ENCODE measurements at regions of chr1 and their contacts with region 1.

Region 1: GRCh38 chr1:172638885-172639831 is 19.7 kb upstream of the FASLG start:
- DNase-seq: peak; percentile 77
- H3K4me3 Mint-ChIP-seq: peak overlapping the region; percentile 62
- H3K27ac Mint-ChIP-seq: peak overlapping the region; percentile 99
- H3K4me1 Mint-ChIP-seq: peaks cover 75% of the 10 kb centered on the region
- H3K27me3 Mint-ChIP-seq: peaks cover 5% of the 10 kb centered on the region

Region 2: DNA sequence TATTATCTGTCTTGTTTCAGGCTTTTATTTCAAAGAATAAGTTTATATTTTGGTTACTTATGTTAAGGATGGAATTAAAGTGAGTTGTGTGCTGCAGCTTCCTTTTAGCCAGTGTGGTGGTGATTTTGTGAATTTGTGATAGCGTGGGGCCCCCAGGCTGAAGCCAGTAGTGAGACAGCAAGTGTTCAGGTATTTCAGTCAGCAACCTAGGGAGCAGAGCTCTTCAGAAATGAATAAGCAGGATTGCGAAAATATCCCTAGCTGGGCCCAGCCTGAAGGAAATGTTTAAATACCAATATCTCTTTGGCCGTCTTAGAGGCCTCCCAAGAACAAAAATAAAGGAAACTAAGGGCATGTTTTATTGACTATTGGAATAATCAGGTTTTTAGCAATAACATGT is 369.5 kb before region 1 on chr1:
- intact Hi-C with region 1: loop called (anchors 5 kb)
- DNase-seq: no peak
- H3K4me3 Mint-ChIP-seq: peak overlapping the region; percentile 43
- H3K27ac Mint-ChIP-seq: peak overlapping the region; percentile 82
- H3K4me1 Mint-ChIP-seq: peaks cover 64% of the 10 kb centered on the region
- H3K27me3 Mint-ChIP-seq: no peaks in the 10 kb centered on the region

Region 3: DNA sequence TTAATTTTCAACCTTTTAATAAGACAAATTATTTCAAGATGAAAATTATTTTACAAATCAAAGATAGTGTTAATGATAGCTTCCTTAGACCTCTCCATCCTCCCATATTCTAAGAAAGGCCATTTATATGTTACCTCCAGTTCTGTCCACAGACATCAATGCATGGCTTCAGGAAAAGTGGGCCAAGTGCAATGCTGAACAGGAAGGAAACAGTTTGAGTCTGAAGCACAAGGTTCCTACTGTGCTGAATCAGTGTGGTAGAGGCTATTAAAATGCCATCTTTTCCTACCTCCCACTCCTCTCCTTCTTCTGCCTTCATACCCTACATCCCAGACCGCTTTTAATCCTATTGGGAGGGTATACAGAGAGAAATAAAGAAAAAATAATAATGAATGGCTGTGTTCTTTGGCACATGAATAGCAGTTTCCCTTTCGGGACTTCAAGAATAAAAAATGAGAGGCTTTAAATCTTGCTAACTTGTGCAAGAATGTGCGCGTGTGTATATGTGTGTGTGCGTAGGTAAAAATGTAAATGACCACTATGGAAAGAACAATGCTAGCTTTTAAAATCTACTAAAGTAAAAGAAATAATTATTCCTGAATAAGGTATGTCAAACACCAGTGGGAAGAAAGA is 281.3 kb before region 1 on chr1:
- intact Hi-C with region 1: loop called (anchors 5 kb)
- DNase-seq: no peak
- H3K4me3 Mint-ChIP-seq: peak overlapping the region; percentile 6
- H3K27ac Mint-ChIP-seq: peak overlapping the region; percentile 83
- H3K4me1 Mint-ChIP-seq: peaks cover 56% of the 10 kb centered on the region
- H3K27me3 Mint-ChIP-seq: no peaks in the 10 kb centered on the region

Region 4: DNA sequence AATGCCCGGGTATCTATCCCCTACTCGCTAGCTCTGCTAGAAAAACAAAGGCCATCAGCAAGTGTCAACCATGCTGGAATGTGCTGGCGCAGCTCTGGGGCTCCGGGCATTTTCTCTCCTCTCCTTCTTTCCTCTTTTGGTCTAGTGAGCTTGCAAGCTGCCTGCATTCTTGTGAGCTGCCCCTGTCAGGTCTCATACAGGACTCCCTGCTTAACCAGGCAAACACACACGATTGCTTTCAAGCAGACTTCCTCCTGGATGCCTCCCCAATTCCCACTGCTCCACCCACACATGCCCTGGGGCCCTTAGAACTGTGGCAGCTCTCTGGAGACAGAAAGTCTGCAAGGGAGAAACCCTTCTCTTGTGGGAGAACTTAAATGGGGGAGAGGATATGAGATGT is 141.9 kb before region 1 on chr1:
- intact Hi-C with region 1: no loop called
- DNase-seq: no peak
- H3K4me3 Mint-ChIP-seq: no peak overlapping the region
- H3K27ac Mint-ChIP-seq: no peak overlapping the region
- H3K4me1 Mint-ChIP-seq: no peaks in the 10 kb centered on the region
- H3K27me3 Mint-ChIP-seq: peaks cover 6% of the 10 kb centered on the region

Region 5: GRCh38 chr1:172561252-172561651 is 77.9 kb before region 1 on chr1:
- intact Hi-C with region 1: no loop called
- DNase-seq: no peak
- H3K4me3 Mint-ChIP-seq: no peak overlapping the region
- H3K27ac Mint-ChIP-seq: no peak overlapping the region
- H3K4me1 Mint-ChIP-seq: peaks cover 12% of the 10 kb centered on the region
- H3K27me3 Mint-ChIP-seq: no peaks in the 10 kb centered on the region

Region 6: GRCh38 chr1:172588296-172589291 is 50.6 kb before region 1 on chr1:
- intact Hi-C with region 1: loop called (anchors 2 kb)
- DNase-seq: no peak
- H3K4me3 Mint-ChIP-seq: peak overlapping the region; percentile 32
- H3K27ac Mint-ChIP-seq: peak overlapping the region; percentile 83
- H3K4me1 Mint-ChIP-seq: peaks cover 20% of the 10 kb centered on the region
- H3K27me3 Mint-ChIP-seq: no peaks in the 10 kb centered on the region

Region 7: DNA sequence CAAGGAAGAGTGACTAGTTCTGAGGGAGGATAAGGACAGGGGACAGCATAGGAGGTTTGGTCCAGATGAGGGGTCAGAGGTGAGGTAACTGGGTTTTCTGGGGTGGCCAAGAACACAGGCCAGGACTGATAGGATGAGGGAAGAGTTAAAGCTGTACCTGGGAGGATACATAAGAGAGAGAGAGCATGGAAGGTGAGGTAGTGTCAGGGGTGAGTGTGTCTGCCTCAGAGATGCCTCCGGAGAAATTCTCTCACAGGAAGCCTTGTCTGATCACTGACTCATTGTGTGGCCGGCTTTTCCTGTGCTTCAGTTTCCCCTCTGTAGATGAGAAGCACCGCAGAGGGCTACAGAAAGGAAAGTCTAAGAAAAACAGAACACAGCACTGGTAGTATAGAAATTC is 60.0 kb after region 1 on chr1:
- intact Hi-C with region 1: loop called (anchors 1 kb)
- DNase-seq: peak; percentile 72
- H3K4me3 Mint-ChIP-seq: peak overlapping the region; percentile 62
- H3K27ac Mint-ChIP-seq: peak overlapping the region; percentile 88
- H3K4me1 Mint-ChIP-seq: no peaks in the 10 kb centered on the region
- H3K27me3 Mint-ChIP-seq: no peaks in the 10 kb centered on the region

Region 8: GRCh38 chr1:172719694-172720138 is 80.6 kb after region 1 on chr1:
- intact Hi-C with region 1: loop called (anchors 1 kb)
- DNase-seq: no peak
- H3K4me3 Mint-ChIP-seq: peak overlapping the region; percentile 6
- H3K27ac Mint-ChIP-seq: peak overlapping the region; percentile 73
- H3K4me1 Mint-ChIP-seq: peaks cover 49% of the 10 kb centered on the region
- H3K27me3 Mint-ChIP-seq: no peaks in the 10 kb centered on the region

Region 9: GRCh38 chr1:172837816-172838680 is 198.9 kb after region 1 on chr1:
- intact Hi-C with region 1: loop called (anchors 5 kb)
- DNase-seq: peak; percentile 29
- H3K4me3 Mint-ChIP-seq: no peak overlapping the region
- H3K27ac Mint-ChIP-seq: peak overlapping the region; percentile 26
- H3K4me1 Mint-ChIP-seq: peaks cover 46% of the 10 kb centered on the region
- H3K27me3 Mint-ChIP-seq: peaks cover 65% of the 10 kb centered on the region